GM23248 (cell line): ENCODE measurements at regions of chr4 and their contacts with region 1.

Region 1: GRCh38 chr4:176377780-176378179 is 58.0 kb downstream of the SPCS3 start:
- DNase-seq: peak; percentile 50
- H3K4me3 ChIP-seq: no peak overlapping the region
- H3K27ac ChIP-seq: no peak overlapping the region
- H3K4me1 ChIP-seq: no peaks in the 10 kb centered on the region
- H3K27me3 ChIP-seq: no peaks in the 10 kb centered on the region

Region 2: DNA sequence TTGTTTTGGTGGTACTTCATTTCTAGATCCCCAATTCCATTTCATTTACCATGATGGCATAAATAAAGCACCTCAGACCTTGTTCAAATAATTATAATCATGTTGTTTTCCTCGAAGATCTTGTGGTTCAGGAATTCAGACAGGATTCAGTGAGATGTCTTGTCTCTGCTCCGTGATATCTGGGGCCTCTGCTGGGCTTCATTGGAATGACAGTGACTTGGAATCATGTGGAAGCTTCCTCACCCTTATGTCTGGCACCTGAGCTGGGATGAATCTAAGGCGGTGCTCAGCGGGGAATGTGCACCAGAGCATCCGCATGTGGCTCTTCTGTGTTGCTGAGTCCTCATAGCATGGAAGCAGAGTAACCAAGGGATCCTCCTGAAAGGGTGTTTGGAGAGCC is 282.8 kb after region 1 on chr4:
- in situ Hi-C with region 1: loop called (anchors 25 kb)
- DNase-seq: peak; percentile 15
- H3K4me3 ChIP-seq: no peak overlapping the region
- H3K27ac ChIP-seq: no peak overlapping the region
- H3K4me1 ChIP-seq: no peaks in the 10 kb centered on the region
- H3K27me3 ChIP-seq: no peaks in the 10 kb centered on the region

Region 3: GRCh38 chr4:177229331-177229730 is 851.6 kb after region 1 on chr4:
- in situ Hi-C with region 1: loop called (anchors 25 kb)
- DNase-seq: peak; percentile 32
- H3K4me3 ChIP-seq: peak overlapping the region; percentile 69
- H3K27ac ChIP-seq: no peak overlapping the region
- H3K4me1 ChIP-seq: peaks cover 6% of the 10 kb centered on the region; the same call in 1 of the 2 replicates
- H3K27me3 ChIP-seq: no peaks in the 10 kb centered on the region